Dorsolateral prefrontal cortex (tissue), 120 donors: ENCODE measurements at regions of chr3 and their contacts with region 1.

Region 1: GRCh38 chr3:150495563-150496168 is 50.6 kb downstream of the SERP1 start:
- DNase-seq: no peak
- H3K4me3 ChIP-seq: no peak overlapping the region
- H3K27ac ChIP-seq: no peak overlapping the region
- H3K27me3 ChIP-seq: no peaks in the 10 kb centered on the region
- CTCF ChIP-seq: peak; percentile 80 to 99 (median 90)

Region 2: GRCh38 chr3:149936812-149937233 is 558.8 kb before region 1 on chr3:
- intact Hi-C with region 1: loop called in 1 of 2 experiments (anchors 10 kb)
- DNase-seq: peak in 3 of 10 donors; percentile 15 to 32 (median 26)
- H3K4me3 ChIP-seq: peak overlapping the region in 10 of 59 donors; percentile 4 to 37 (median 20)
- H3K27ac ChIP-seq: peak overlapping the region in 1 of 59 donors; percentile 7
- H3K27me3 ChIP-seq: no peaks in the 10 kb centered on the region
- CTCF ChIP-seq: peak in 55 of 56 donors; percentile 22 to 77 (median 57)

Region 3: GRCh38 chr3:150227839-150228238 is 267.8 kb before region 1 on chr3:
- intact Hi-C with region 1: loop called (anchors 2 to 5 kb)
- DNase-seq: peak in 2 of 10 donors; percentile 44 to 63
- H3K4me3 ChIP-seq: no peak overlapping the region
- H3K27ac ChIP-seq: no peak overlapping the region
- H3K27me3 ChIP-seq: no peaks in the 10 kb centered on the region
- CTCF ChIP-seq: peak in 55 of 56 donors; percentile 20 to 79 (median 63)

Region 4: GRCh38 chr3:150348500-150348899 is 147.2 kb before region 1 on chr3:
- intact Hi-C with region 1: loop called in 1 of 2 experiments (anchors 5 kb)
- DNase-seq: no peak
- H3K4me3 ChIP-seq: no peak overlapping the region
- H3K27ac ChIP-seq: peak overlapping the region in 2 of 59 donors; percentile 1 to 32
- H3K27me3 ChIP-seq: no peaks in the 10 kb centered on the region
- CTCF ChIP-seq: no peak

Region 5: DNA sequence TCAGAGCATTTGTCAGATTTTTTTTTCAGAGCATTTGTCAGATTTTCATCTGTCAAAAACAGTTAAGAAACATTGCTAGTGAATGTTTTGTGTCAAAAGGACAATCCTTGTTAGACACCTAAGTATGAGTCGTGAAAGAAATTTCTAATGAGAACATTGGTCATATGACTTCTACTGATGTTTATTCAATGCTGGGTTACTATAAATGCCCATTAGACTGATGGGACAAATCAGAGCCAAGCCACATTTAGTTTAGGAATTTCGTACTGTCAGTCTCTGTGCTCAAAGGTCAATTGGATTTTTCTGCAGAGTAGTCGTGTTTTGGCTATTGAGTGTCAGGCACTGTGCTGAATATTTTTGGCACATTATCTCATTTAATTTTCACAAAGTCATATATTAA is 56.0 kb before region 1 on chr3:
- intact Hi-C with region 1: no loop called
- DNase-seq: no peak
- H3K4me3 ChIP-seq: no peak overlapping the region
- H3K27ac ChIP-seq: no peak overlapping the region
- H3K27me3 ChIP-seq: no peaks in the 10 kb centered on the region
- CTCF ChIP-seq: no peak

Region 6: DNA sequence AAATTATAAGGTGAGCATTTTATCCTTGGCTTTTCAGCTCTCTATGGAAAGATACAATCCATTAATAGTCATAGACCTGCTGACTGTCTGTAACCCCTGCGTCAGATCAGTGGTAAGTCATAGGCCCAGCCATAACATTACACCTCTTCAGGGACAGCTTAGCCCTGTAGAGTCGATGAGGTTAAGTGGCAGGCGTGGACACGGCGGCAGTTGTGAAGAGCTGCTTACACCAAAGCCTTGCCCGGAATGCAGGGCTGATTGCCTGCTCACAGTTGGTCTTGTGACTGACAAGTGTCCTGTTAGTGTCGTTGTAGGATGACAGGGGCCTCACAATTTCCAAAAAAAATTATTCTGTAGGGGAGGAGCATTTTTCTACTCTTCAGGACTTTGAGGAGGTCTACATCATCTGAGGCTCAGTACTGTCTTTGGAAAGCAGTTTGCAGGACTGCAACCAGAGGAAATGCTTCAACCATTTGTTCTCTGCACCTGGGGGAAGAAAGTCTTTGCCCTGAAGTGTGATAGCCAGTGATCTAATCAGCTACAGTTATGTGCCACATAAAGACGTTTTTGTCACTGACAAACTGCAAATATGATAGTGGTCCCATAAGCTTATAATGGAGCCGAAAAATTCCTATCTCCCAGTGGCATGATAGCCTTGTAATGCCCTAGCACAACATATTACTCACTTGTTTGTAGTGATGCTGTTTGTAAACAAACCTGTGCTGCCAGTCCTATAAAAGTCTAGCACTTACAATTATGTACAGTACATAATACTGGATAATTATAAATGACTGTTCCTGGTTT is 92.6 kb after region 1 on chr3:
- intact Hi-C with region 1: no loop called
- DNase-seq: no peak
- H3K4me3 ChIP-seq: no peak overlapping the region
- H3K27ac ChIP-seq: peak overlapping the region in 2 of 59 donors; percentile 11 to 18
- H3K27me3 ChIP-seq: no peaks in the 10 kb centered on the region
- CTCF ChIP-seq: no peak